ENCODE measurements at regions of chr4 and their contacts with region 1.

Region 1: GRCh38 chr4:86593688-86594558 is at the start of gene PTPN13:
- DNase-seq: peak; percentile 91 to 95
- H3K4me3 ChIP-seq: peak within 1 kb of the TSS; percentile 79
- H3K27ac ChIP-seq: no peak within 1 kb of the TSS; the same call in 1 of the 2 replicates
- H3K4me1 ChIP-seq: peaks cover 28% of the 10 kb centered on the region
- H3K27me3 ChIP-seq: no peaks in the 10 kb centered on the region
- CTCF ChIP-seq: no peak
- total RNA-seq, gene PTPN13: 6.9 and 8.3 TPM in 2 replicates

Region 2: GRCh38 chr4:86549163-86549788 is 44.6 kb before region 1 on chr4:
- CTCF ChIA-PET with region 1: no interaction called
- POLR2A ChIA-PET with region 1: no interaction called
- intact Hi-C with region 1: no loop called
- DNase-seq: no peak
- H3K4me3 ChIP-seq: no peak overlapping the region
- H3K27ac ChIP-seq: no peak overlapping the region
- H3K4me1 ChIP-seq: no peaks in the 10 kb centered on the region
- H3K27me3 ChIP-seq: no peaks in the 10 kb centered on the region
- CTCF ChIP-seq: no peak

Region 3: DNA sequence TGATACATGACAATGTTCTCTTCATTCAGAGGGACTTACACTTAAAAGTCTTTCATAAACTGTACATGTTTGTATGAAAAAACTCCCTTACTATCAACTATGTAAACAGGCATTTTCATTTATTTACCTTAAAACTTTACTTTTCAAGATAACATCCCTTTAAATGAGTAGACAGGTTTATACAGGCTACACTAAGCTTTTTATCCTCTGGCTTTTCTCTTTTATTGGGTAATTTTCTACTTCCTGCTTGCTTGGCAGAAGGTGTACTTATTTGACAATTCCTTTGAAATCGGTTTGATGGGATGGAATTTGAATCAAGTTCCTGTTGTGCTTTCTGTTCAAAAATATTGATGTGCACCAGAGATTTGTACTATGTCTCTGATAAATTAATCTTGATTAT is 81.6 kb after region 1 on chr4:
- CTCF ChIA-PET with region 1: interaction called, 17 read pairs
- POLR2A ChIA-PET with region 1: no interaction called
- intact Hi-C with region 1: no loop called
- DNase-seq: no peak
- H3K4me3 ChIP-seq: no peak overlapping the region
- H3K27ac ChIP-seq: no peak overlapping the region
- H3K4me1 ChIP-seq: 0 out of 2 replicates have a peak, but pooled peaks cover 5% of the 10 kb centered on the region
- H3K27me3 ChIP-seq: no peaks in the 10 kb centered on the region
- CTCF ChIP-seq: no peak